PC-9 (cell line): ENCODE measurements at regions of chr5 and their contacts with region 1.

Region 1: DNA sequence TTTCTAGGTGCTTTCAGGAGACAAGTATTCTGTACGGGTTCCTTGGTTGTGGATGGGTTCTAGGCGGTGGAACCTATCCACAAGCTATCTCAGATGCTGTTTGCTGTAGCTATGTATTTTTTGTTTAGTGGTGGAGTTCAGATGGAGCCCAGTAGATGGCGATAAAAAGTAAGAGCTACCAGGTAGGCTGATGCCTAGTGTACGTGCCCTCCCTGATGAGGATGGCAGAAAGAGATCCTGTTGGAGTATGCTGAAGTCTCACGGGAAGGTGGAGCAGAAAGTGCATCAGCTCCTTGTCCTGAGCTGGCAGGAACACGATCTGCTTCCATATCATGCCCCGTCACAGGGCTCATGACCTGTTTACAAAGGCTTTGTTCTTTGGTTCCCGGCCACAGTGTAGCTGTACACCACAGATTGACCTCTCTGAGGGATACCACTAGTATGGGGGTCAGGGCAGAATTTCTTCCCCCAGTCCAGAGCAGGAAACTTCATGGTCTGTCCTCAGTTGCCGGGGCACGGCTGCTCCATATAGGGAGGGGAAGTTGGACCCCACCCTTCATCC is 12.6 kb upstream of the UGT3A2 start:
- DNase-seq: peak; percentile 44 to 53
- H3K4me3 ChIP-seq: no peak overlapping the region
- H3K27ac ChIP-seq: no peak overlapping the region
- H3K4me1 ChIP-seq: no peaks in the 10 kb centered on the region
- H3K27me3 ChIP-seq: peaks cover 3% of the 10 kb centered on the region; the same call in 1 of the 2 replicates
- CTCF ChIP-seq: peak; percentile 88

Region 2: GRCh38 chr5:36089989-36090564 is 10.8 kb after region 1 on chr5:
- CTCF ChIA-PET with region 1: interaction called, 12 read pairs
- POLR2A ChIA-PET with region 1: interaction called, 12 read pairs
- intact Hi-C with region 1: no loop called
- DNase-seq: peak; percentile 16 to 57
- H3K4me3 ChIP-seq: no peak overlapping the region
- H3K27ac ChIP-seq: no peak overlapping the region
- H3K4me1 ChIP-seq: no peaks in the 10 kb centered on the region
- H3K27me3 ChIP-seq: no peaks in the 10 kb centered on the region
- CTCF ChIP-seq: peak; percentile 40; the same call in 1 of the 2 replicates

Region 3: GRCh38 chr5:36264202-36264760 is 185.0 kb after region 1 on chr5:
- CTCF ChIA-PET with region 1: interaction called, 14 read pairs
- POLR2A ChIA-PET with region 1: no interaction called
- intact Hi-C with region 1: no loop called
- DNase-seq: no peak
- H3K4me3 ChIP-seq: no peak overlapping the region
- H3K27ac ChIP-seq: no peak overlapping the region
- H3K4me1 ChIP-seq: no peaks in the 10 kb centered on the region
- H3K27me3 ChIP-seq: no peaks in the 10 kb centered on the region
- CTCF ChIP-seq: no peak

Region 4: GRCh38 chr5:36507332-36507952 is 428.2 kb after region 1 on chr5:
- CTCF ChIA-PET with region 1: interaction called, 11 read pairs
- POLR2A ChIA-PET with region 1: no interaction called
- intact Hi-C with region 1: loop called (anchors 1 kb)
- DNase-seq: peak; percentile 52 to 74
- H3K4me3 ChIP-seq: no peak overlapping the region
- H3K27ac ChIP-seq: no peak overlapping the region
- H3K4me1 ChIP-seq: peaks cover 14% of the 10 kb centered on the region
- H3K27me3 ChIP-seq: no peaks in the 10 kb centered on the region
- CTCF ChIP-seq: peak; percentile 98

Region 5: DNA sequence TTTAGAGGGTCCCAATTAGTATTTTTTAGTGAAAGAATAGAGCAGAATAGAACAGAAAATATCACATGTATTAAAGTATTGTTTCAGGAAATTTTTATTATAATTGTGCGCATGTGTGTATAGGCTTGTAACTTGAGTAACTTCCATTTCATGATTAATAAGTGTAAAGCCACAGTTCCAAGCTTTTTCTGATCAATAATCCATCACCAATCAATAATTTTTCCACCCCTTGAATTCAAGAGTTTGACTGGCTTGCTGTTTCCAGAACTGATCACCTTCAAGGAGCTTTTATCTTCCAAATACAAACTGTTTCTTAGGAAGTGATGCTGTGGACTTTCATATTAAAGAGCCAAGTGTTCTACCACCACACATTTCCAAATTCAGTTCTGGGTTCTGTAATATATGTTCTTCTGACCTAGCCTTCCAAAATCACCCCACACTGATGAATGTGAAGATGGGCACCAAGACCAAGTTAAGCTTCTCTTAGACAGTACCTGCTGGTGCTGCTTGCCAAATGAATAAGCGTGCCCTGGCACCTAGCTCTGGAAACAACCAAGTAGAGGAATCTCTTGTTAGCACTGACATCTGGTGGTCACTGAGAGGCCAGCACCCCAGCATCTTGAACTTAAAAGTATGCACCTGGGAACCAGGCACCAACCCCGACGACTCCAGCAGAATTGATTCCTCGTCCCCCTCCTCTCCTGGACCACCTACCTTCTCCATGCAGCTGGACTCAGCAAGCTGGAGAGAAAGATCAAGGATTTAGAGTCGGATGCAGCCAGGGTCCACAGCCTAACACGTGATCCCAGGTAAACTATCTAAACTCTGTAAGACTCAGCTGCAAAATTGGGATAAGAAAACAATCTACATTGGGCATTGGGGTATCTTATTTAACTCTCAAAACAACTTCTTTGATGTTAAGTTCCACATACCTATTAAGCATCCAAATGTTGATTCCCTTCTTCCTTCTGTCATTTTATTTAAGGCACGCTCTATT is 616.7 kb after region 1 on chr5:
- CTCF ChIA-PET with region 1: interaction called, 12 read pairs
- POLR2A ChIA-PET with region 1: no interaction called
- intact Hi-C with region 1: loop called (anchors 1 kb)
- DNase-seq: peak; percentile 55 to 65
- H3K4me3 ChIP-seq: no peak overlapping the region
- H3K27ac ChIP-seq: no peak overlapping the region
- H3K4me1 ChIP-seq: peaks cover 5% of the 10 kb centered on the region; the same call in 1 of the 2 replicates
- H3K27me3 ChIP-seq: no peaks in the 10 kb centered on the region
- CTCF ChIP-seq: peak; percentile 97